PC-9 (cell line): ENCODE measurements at regions of chr12 and their contacts with region 1.

Region 1: GRCh38 chr12:21657326-21658077 is at the start of gene LDHB:
- DNase-seq: peak; percentile 90 to 96
- H3K4me3 ChIP-seq: peak within 1 kb of the TSS; percentile 94
- H3K27ac ChIP-seq: peak within 1 kb of the TSS; percentile 51
- H3K4me1 ChIP-seq: peaks cover 20% of the 10 kb centered on the region
- H3K27me3 ChIP-seq: no peaks in the 10 kb centered on the region
- CTCF ChIP-seq: no peak
- total RNA-seq, gene LDHB: 994 and 1,055 TPM in 2 replicates

Region 2: DNA sequence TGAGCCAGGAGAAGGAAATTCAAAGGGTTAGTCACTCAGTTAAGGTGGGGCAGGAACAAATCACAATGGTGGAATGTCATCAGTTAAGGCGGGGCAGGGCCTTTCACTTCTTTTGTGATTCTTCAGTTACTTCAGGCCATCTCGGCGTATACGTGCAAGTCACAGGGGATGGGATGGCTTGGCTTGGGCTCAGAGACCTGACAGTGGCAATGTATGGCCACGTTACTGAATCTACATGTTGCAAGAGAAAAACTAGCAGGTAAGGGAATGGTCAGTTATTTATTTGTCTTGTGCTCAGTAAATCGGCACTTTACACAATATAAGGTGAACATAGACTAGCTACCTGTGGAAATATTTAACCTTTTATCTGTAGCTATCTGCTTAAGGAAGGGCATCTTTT is 835.1 kb before region 1 on chr12:
- CTCF ChIA-PET with region 1: no interaction called
- POLR2A ChIA-PET with region 1: interaction called, 5 read pairs
- intact Hi-C with region 1: loop called (anchors 5 kb)
- DNase-seq: peak; percentile 64 to 82
- H3K4me3 ChIP-seq: peak overlapping the region; percentile 41
- H3K27ac ChIP-seq: peak overlapping the region; percentile 64
- H3K4me1 ChIP-seq: peaks cover 7% of the 10 kb centered on the region; the same call in 1 of the 2 replicates
- H3K27me3 ChIP-seq: no peaks in the 10 kb centered on the region
- CTCF ChIP-seq: no peak

Region 3: GRCh38 chr12:21073822-21074460 is 583.6 kb before region 1 on chr12:
- CTCF ChIA-PET with region 1: no interaction called
- POLR2A ChIA-PET with region 1: interaction called, 13 read pairs
- intact Hi-C with region 1: no loop called
- DNase-seq: peak; percentile 67 to 72
- H3K4me3 ChIP-seq: no peak overlapping the region
- H3K27ac ChIP-seq: peak overlapping the region; percentile 86
- H3K4me1 ChIP-seq: peaks cover 20% of the 10 kb centered on the region
- H3K27me3 ChIP-seq: no peaks in the 10 kb centered on the region
- CTCF ChIP-seq: peak; percentile 45

Region 4: DNA sequence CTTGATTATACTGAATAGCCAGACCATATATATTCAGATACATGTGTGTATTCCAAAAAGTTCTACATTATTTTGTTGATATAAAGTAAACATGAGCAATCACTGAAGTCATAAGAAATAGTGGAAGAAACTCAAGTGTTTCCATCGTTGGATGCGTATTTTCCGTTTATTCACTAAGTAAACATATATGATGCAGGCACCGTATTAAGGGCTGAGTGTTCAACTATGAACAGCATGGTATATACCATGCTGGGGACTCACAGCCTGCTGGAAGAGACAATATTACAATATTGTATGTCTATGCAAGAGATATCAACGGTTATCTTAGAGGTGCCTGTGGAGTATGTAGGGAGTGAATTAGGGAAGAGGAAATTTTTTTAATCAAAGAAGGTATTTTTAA is 218.9 kb before region 1 on chr12:
- CTCF ChIA-PET with region 1: no interaction called
- POLR2A ChIA-PET with region 1: no interaction called
- intact Hi-C with region 1: loop called (anchors 5 kb)
- DNase-seq: no peak
- H3K4me3 ChIP-seq: peak overlapping the region; percentile 99
- H3K27ac ChIP-seq: peak overlapping the region; percentile 97
- H3K4me1 ChIP-seq: peaks cover 23% of the 10 kb centered on the region
- H3K27me3 ChIP-seq: no peaks in the 10 kb centered on the region
- CTCF ChIP-seq: no peak

Region 5: DNA sequence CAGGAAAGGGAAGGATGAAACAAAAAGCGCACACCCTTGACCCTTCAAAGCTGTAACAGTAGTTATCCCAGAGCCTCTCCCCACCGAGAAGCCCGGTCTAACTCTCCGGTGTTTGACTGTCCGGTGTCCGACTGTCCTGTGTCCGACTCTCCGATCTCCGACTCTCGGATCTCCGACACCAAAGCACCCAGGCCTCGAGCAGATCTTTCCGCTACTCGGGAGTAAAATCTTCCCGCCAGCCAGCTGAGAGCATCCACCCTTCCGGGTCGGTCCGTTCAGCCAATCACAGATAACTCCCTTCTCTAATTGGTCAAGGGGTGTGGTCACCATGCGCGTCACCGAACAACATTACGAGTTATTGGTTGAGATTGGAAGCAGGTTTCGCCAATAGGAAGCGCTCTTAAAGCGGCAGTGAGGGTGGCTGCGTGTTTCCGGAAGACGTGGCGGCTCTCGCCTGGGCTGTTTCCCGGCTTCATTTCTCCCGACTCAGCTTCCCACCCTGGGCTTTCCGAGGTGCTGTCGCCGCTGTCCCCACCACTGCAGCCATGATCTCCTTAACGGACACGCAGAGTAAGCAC is 156.0 kb before region 1 on chr12 and contains the starts of genes GOLT1B and RECQL:
- CTCF ChIA-PET with region 1: no interaction called
- POLR2A ChIA-PET with region 1: no interaction called
- intact Hi-C with region 1: loop called (anchors 2 kb)
- DNase-seq: peak; percentile 93 to 95
- H3K4me3 ChIP-seq: peak within 1 kb of the TSS; percentile 93
- H3K27ac ChIP-seq: peak within 1 kb of the TSS; percentile 62
- H3K4me1 ChIP-seq: peaks cover 28% of the 10 kb centered on the region
- H3K27me3 ChIP-seq: no peaks in the 10 kb centered on the region
- CTCF ChIP-seq: no peak
- total RNA-seq, gene GOLT1B: 38.0 and 39.0 TPM in 2 replicates
- total RNA-seq, gene RECQL: 33.1 and 34.5 TPM in 2 replicates

Region 6: GRCh38 chr12:21631367-21631766 is 26.1 kb before region 1 on chr12:
- CTCF ChIA-PET with region 1: no interaction called
- POLR2A ChIA-PET with region 1: no interaction called
- intact Hi-C with region 1: no loop called
- DNase-seq: no peak
- H3K4me3 ChIP-seq: no peak overlapping the region
- H3K27ac ChIP-seq: no peak overlapping the region
- H3K4me1 ChIP-seq: no peaks in the 10 kb centered on the region
- H3K27me3 ChIP-seq: no peaks in the 10 kb centered on the region
- CTCF ChIP-seq: no peak

Region 7: GRCh38 chr12:21642707-21643389 is 14.7 kb before region 1 on chr12:
- CTCF ChIA-PET with region 1: no interaction called
- POLR2A ChIA-PET with region 1: interaction called, 24 read pairs
- intact Hi-C with region 1: loop called (anchors 2 kb)
- DNase-seq: no peak
- H3K4me3 ChIP-seq: no peak overlapping the region
- H3K27ac ChIP-seq: no peak overlapping the region
- H3K4me1 ChIP-seq: peaks cover 21% of the 10 kb centered on the region
- H3K27me3 ChIP-seq: no peaks in the 10 kb centered on the region
- CTCF ChIP-seq: no peak

Region 8: DNA sequence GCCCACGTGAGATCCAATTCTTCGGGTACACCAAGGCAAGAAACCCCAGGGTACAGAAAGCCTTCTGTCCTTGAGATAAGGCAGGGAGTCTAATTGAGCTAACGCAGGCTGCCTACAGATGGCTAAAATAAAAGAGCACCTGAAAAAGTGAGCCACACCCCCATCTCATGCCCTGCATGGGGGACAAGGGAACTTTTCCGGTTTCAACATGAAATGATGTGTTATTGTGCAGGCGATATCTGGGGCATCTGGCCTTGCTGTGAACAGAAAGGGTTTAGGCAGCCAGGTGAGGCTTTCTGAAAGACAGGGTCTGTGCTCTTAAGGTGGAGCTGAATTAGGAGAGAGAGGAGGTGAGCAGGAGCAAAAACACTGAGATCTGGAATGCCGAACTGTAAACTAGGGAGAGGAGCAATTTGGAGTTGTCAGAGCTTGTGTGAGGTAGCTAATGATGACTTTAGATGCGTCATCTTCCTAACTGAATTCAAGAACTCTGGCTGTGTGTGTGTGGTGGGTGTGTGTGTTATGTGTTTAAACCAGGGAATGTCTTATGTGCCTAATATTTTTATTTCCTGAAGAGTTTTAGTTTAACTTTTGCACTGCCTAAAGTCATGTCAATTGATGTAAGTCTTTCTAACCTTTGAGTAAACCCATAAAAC is 20.2 kb after region 1 on chr12:
- CTCF ChIA-PET with region 1: interaction called, 12 read pairs
- POLR2A ChIA-PET with region 1: no interaction called
- intact Hi-C with region 1: no loop called
- DNase-seq: no peak
- H3K4me3 ChIP-seq: no peak overlapping the region
- H3K27ac ChIP-seq: no peak overlapping the region
- H3K4me1 ChIP-seq: no peaks in the 10 kb centered on the region; the same call in 1 of the 2 replicates
- H3K27me3 ChIP-seq: no peaks in the 10 kb centered on the region
- CTCF ChIP-seq: no peak